Lower leg skin (tissue), 4 donors: ENCODE measurements at regions of chr20 and their contacts with region 1.

Region 1: DNA sequence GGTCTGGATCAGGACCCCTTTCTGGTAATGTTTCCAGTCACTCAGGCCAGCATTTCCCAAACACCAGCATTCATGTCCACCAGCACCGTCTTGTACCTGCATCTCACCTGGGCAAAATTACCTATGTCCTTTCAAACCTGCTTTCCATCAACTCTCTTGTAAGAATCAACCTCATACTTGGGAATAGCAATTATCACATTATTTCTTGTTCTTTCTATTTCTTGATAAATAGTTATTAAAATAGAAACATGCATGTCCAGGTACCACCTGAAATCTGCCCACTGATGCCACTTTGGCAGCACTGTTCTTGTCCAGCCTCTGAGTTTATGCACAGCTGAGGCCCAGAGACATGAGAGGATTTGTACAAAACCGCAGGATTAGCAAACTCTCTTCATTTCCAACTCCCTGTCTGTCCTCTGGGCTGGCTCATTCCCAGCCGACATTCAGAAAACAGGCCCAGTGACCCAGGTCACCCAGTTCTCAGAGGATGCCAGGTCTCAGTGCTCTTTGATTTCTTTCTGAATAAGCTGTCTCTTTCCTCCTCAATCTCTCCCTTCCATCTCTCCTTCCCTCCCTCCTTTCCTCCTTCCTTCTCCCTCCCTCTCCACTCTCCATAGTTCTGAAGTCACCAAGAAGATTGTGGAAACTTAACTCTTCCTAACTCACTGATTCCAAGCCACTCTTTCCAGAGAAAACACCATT is 372.6 kb upstream of the SULF2 start:
- DNase-seq: no peak
- H3K4me3 ChIP-seq: no peak overlapping the region
- CTCF ChIP-seq: no peak
- POLR2A ChIP-seq: no peak

Region 2: DNA sequence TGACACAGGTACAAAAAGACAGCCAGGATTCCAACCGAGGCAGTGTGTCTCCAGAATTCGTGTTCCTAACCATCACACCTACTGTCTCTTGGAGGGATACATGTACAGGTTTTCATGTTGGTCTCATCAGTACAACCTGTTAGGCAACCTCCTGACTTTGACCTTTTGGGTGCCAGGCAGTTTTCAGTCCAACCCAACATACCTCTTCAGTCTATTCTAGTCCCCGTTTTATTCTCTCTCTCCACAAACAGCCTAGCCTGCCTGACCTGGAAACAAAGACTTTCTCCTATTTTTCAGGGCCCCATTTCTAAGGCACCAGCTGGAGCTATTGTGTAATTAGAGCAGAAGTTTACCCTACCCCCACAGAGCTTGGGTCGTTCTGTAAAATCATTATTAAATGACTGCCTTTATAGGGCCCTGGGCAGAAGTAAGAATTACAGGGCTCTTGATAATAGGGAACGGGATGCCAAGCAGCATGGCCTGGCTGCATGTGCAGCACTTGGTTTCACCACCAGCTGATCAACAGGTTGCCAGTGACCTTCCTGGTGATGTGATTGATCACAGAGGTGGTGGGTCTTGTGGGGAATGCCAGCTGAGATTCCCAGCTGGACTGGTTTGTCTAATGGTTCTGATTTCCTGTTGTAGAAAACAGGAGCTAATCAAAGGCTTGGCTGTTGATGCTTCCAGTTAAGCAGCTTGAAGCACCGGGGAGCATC is 44.9 kb before region 1 on chr20:
- intact Hi-C with region 1: no loop called
- DNase-seq: no peak
- H3K4me3 ChIP-seq: no peak overlapping the region
- CTCF ChIP-seq: no peak
- POLR2A ChIP-seq: no peak

Region 3: GRCh38 chr20:48200961-48201587 is 43.2 kb after region 1 on chr20:
- intact Hi-C with region 1: loop called (anchors 1 kb)
- DNase-seq: no peak
- H3K4me3 ChIP-seq: no peak overlapping the region
- CTCF ChIP-seq: no peak
- POLR2A ChIP-seq: no peak